Activated CD4-positive, alpha-beta T cell treated with anti-CD3 and anti-CD28 coated beads, Interleukin-2, amount 10 ng/mL, durations not matched to agents 24 days and 14 days (primary cell): ENCODE measurements at regions of chr1 and their contacts with region 1.

Region 1: DNA sequence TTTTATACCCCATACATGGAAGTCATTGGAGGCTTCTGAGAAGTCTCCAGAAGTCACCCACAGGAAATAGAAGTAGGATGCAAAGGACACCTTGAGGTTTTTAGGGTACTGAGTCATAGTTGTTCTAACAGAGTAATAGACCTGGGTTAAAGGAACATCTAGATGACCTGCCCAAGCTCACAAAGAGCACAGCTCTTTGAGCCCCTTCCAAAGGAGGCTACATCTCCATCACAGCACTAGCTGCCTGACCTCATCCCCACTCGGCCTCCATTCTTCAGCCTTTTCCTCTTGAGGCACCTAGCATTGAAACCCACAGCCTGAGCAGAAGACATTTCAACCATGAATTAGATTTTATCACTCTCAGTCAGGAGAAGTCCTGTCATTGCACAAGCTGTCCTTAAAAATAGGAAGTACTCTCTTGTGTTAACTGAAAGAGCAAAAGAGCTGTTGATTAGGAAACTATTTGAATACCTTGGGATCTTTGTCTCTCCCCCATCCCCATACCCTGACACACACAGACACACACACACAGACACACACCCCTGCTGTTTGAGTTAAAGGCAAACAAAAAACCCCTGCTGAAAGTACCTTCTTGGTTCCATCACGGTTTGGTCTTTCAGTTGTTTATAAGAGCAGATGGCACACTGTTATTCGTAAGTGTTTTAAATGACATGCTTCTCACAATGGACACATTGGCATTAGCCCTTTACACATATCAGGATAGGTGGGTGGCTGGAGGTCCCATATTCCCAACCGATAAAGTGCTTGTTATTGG is 22.2 kb downstream of the MKNK1 start:
- DNase-seq: peak; percentile 83
- H3K4me3 Mint-ChIP-seq: peak overlapping the region; percentile 67
- H3K27ac Mint-ChIP-seq: peak overlapping the region; percentile 96
- H3K4me1 Mint-ChIP-seq: peaks cover 52% of the 10 kb centered on the region
- H3K27me3 Mint-ChIP-seq: no peaks in the 10 kb centered on the region

Region 2: GRCh38 chr1:46489638-46490405 is 92.0 kb before region 1 on chr1 and contains the start of gene DMBX1:
- intact Hi-C with region 1: no loop called
- DNase-seq: peak; percentile 84
- H3K4me3 Mint-ChIP-seq: peak within 1 kb of the TSS; percentile 76
- H3K27ac Mint-ChIP-seq: peak within 1 kb of the TSS; percentile 60
- H3K4me1 Mint-ChIP-seq: peaks cover 22% of the 10 kb centered on the region
- H3K27me3 Mint-ChIP-seq: peaks cover 90% of the 10 kb centered on the region
- total RNA-seq, gene DMBX1: 0.07 TPM in 1 of 2 replicates, not detected in the other

Region 3: GRCh38 chr1:46532498-46533178 is 49.2 kb before region 1 on chr1:
- intact Hi-C with region 1: no loop called
- DNase-seq: peak; percentile 92
- H3K4me3 Mint-ChIP-seq: peak overlapping the region; percentile 27
- H3K27ac Mint-ChIP-seq: no peak overlapping the region
- H3K4me1 Mint-ChIP-seq: peaks cover 20% of the 10 kb centered on the region
- H3K27me3 Mint-ChIP-seq: peaks cover 40% of the 10 kb centered on the region

Region 4: GRCh38 chr1:46595127-46595526 is 13.3 kb after region 1 on chr1:
- intact Hi-C with region 1: loop called (anchors 2 kb)
- DNase-seq: peak; percentile 73
- H3K4me3 Mint-ChIP-seq: peak overlapping the region; percentile 40
- H3K27ac Mint-ChIP-seq: peak overlapping the region; percentile 26
- H3K4me1 Mint-ChIP-seq: peaks cover 56% of the 10 kb centered on the region
- H3K27me3 Mint-ChIP-seq: no peaks in the 10 kb centered on the region

Region 5: DNA sequence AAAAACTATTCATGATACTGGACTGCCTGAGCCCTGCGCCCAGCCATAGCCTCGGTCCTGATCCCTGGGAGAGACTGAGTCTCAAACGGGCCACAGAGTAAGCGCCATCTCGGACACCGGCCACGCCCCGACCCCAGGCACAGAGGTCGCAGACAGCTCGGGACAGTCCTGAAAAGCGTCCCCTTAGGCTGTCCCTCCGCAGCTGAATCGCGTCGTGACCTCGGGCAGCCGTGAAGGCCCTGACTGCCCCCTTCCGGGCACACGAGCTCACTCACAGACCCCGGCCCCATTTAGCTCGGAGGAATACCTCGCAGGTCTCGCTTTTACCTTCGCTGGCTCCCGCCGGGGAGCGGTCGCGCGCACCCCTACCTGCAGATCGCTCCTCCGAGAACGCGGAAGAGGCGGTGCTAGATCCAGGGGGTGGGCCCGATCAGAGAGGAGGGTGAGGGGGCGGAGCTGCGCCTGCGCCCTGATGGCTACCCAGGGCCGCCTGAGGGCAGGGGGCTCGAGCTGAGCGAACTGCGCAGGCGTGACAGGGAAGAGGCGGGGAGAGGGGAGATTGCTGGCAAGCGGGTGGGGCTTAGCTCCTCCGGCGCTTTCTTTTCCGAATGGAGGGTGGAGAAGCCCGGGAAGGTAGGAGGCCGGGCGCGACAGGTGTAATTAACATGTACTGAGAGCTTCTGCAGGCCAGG is 22.1 kb after region 1 on chr1 and contains the start of gene MKNK1:
- intact Hi-C with region 1: loop called (anchors 1 kb)
- DNase-seq: peak; percentile 100
- H3K4me3 Mint-ChIP-seq: peak within 1 kb of the TSS; percentile 92
- H3K27ac Mint-ChIP-seq: peak within 1 kb of the TSS; percentile 87
- H3K4me1 Mint-ChIP-seq: peaks cover 60% of the 10 kb centered on the region
- H3K27me3 Mint-ChIP-seq: no peaks in the 10 kb centered on the region
- total RNA-seq, gene MKNK1: 41.8 and 42.5 TPM in 2 replicates

Region 6: DNA sequence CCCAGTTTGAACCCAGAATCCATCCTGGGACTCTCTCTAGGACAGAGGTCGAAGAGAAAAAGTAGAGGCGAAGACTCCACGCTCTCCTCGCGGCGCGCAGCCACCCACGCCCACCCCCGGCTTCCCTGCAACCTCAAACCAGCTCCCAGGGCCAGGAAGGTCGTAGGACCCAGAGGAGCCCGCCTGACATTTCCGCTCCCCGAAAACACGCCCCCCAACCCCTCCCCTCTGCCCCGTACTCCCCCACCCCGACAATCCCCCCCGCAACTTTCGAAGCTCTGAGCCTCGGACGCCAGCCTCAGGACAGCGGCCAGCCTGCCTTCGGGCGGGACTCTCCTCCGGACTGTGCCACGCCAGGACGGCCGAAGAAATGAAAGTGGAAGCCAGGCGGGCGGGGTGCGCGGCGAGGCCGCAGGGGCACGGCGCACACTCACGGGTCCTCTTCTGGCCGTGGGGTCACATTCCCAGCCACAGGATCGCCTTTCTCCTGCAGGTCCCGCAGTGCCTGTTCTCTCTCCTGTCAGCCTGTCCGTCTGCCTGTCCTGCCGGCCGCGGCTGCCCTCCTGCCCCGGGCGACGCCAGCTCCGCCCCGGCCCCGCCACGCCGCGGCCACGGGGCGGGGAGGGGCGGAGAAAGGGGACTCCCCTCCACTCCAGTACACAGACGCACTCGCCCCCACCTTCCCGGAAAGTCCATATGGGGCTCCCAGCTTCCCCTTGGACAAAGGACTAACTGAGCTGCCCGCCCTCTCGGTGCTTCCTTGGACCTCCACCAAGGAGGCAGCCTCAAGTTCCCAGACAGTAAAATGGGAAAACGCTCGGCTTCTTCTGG is 34.6 kb after region 1 on chr1 and contains the start of gene MOB3C:
- intact Hi-C with region 1: loop called (anchors 2 kb)
- DNase-seq: peak; percentile 91
- H3K4me3 Mint-ChIP-seq: peak within 1 kb of the TSS; percentile 94
- H3K27ac Mint-ChIP-seq: peak within 1 kb of the TSS; percentile 90
- H3K4me1 Mint-ChIP-seq: peaks cover 55% of the 10 kb centered on the region
- H3K27me3 Mint-ChIP-seq: no peaks in the 10 kb centered on the region
- total RNA-seq, gene MOB3C: 15.0 and 17.8 TPM in 2 replicates

Region 7: GRCh38 chr1:46643368-46643775 is 61.5 kb after region 1 on chr1:
- intact Hi-C with region 1: no loop called
- DNase-seq: no peak
- H3K4me3 Mint-ChIP-seq: no peak overlapping the region
- H3K27ac Mint-ChIP-seq: no peak overlapping the region
- H3K4me1 Mint-ChIP-seq: peaks cover 4% of the 10 kb centered on the region
- H3K27me3 Mint-ChIP-seq: no peaks in the 10 kb centered on the region